Dendritic cell treated with granulocyte-macrophage colony-stimulating factor and Interleukin-4, amounts not matched to agents 40 ng/mL and 50 ng/mL, for 4 days (primary cell): ENCODE measurements at regions of chr2 and their contacts with region 1.

Region 1: GRCh38 chr2:234679741-234680687 is 183.1 kb upstream of the ARL4C start:
- H3K4me3 Mint-ChIP-seq: no peak overlapping the region
- H3K27ac Mint-ChIP-seq: no peak overlapping the region
- H3K4me1 Mint-ChIP-seq: no peaks in the 10 kb centered on the region
- H3K27me3 Mint-ChIP-seq: no peaks in the 10 kb centered on the region

Region 2: DNA sequence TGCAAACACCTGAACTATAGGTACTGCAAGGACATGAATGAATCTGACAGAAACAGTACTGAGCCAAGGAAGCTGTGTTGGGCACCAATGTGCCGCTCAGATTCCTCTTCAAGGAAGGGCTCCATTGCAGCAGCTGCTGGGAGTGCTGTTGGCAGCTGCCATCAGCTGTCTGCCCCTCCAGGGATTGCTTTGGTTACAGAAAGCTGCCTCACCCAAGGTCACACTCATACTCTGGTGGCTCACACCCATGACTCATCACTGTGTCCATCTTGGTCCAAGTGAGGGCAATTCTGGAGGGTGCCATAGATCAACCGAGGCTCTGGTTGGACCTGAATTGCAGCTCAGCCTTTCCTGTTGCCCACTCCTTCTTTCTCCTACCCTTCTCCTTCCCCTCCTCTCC is 787.2 kb before region 1 on chr2:
- intact Hi-C with region 1: loop called (anchors 5 kb)
- H3K4me3 Mint-ChIP-seq: no peak overlapping the region
- H3K27ac Mint-ChIP-seq: no peak overlapping the region
- H3K4me1 Mint-ChIP-seq: no peaks in the 10 kb centered on the region
- H3K27me3 Mint-ChIP-seq: peaks cover 12% of the 10 kb centered on the region

Region 3: GRCh38 chr2:234643407-234643806 is 36.6 kb before region 1 on chr2:
- intact Hi-C with region 1: no loop called
- H3K4me3 Mint-ChIP-seq: no peak overlapping the region
- H3K27ac Mint-ChIP-seq: no peak overlapping the region
- H3K4me1 Mint-ChIP-seq: no peaks in the 10 kb centered on the region
- H3K27me3 Mint-ChIP-seq: no peaks in the 10 kb centered on the region